Posterior vena cava (tissue), 2 donors: ENCODE measurements at regions of chr13 and their contacts with region 1.

Region 1: GRCh38 chr13:101474419-101474957 is 22.0 kb downstream of the ITGBL1 start:
- DNase-seq: no peak

Region 2: GRCh38 chr13:101144808-101145419 is 329.6 kb before region 1 on chr13:
- intact Hi-C with region 1: loop called in 1 of 2 experiments (anchors 10 kb)
- DNase-seq: no peak

Region 3: GRCh38 chr13:101681834-101682233 is 207.3 kb after region 1 on chr13:
- intact Hi-C with region 1: no loop called
- DNase-seq: no peak